ENCODE measurements at regions of chr19 and their contacts with region 1.

Region 1: GRCh38 chr19:18281082-18282020 is at the start of gene JUND:
- DNase-seq: peak; percentile 98
- ATAC-seq: peak; percentile 81
- H3K4me3 ChIP-seq: peak within 1 kb of the TSS; percentile 95
- H3K27ac ChIP-seq: peak within 1 kb of the TSS; percentile 100
- H3K4me1 ChIP-seq: peaks cover 14% of the 10 kb centered on the region
- H3K27me3 ChIP-seq: no peaks in the 10 kb centered on the region
- CTCF ChIP-seq: 0 out of 2 replicates have a peak, but pooled peaks have one; percentile 17
- POLR2A ChIP-seq: peak; percentile 98
- RAD21 ChIP-seq: no peak
- total RNA-seq, gene JUND: 14.2 and 22.8 TPM in 2 replicates

Region 2: DNA sequence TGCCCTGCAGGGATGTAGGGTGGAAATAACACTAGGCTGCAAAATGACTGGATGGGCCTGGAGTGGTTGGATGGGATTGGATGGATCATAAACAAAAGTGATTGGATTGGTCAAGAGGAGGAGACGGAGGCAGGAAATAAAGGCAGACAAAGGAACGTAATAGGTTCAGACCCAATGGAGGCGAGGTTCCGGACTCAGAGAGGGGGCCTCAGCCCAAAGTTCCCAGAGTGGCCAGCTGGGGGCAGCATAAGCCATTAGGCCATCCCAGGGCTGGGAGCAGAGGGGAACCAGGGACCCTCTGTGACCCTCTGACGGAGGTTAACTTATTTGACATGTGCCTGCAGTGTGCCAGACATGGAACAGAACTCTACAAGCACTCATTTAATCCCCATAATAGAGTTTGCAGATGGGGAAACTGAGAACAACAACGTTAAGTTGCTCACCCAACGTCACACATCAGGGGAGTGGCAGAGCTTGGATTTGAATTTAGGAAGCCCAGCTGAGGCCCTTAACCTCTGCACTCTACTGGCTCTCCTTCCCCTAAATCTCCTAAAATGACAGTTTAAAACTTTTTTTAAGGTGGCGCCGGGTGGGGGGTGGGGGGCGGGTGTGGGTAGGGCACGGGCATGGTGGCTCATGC is 577.4 kb before region 1 on chr19:
- CTCF ChIA-PET with region 1: no interaction called
- POLR2A ChIA-PET with region 1: no interaction called
- dilution Hi-C with region 1: no loop called
- in situ Hi-C with region 1: no loop called
- intact Hi-C with region 1: no loop called
- DNase-seq: peak; percentile 31
- ATAC-seq: peak; percentile 67
- H3K4me3 ChIP-seq: no peak overlapping the region
- H3K27ac ChIP-seq: no peak overlapping the region
- H3K4me1 ChIP-seq: no peaks in the 10 kb centered on the region
- H3K27me3 ChIP-seq: peaks cover 5% of the 10 kb centered on the region; the same call in 1 of the 2 replicates
- CTCF ChIP-seq: peak; percentile 54
- POLR2A ChIP-seq: no peak
- RAD21 ChIP-seq: peak; percentile 45; the same call in 1 of the 2 replicates

Region 3: DNA sequence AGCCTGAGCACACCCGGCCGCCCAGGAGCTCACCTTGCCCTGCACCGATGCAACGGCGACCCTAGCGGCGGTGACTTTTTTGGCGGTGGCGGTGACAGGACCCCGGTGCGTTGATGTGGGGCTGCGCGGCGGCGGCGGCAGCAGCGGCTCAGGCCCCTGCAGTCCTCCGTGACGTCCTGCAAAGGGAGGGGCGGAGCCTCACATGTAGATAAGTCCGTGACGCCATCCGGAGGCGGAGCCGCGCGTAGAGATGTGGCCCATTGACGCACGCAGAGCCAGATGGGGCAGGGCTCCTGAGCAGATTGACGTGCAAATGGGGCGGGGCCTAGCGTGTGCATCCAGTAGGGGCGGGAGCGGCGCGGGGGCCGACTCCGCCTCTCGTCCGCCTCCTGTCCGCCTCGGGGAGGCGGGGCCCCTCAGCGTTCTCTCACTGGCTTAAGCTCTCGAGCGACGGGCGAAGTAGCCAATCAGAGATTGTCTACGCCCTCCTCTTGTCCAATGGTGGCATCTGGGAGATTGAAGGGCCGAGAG is 77.4 kb before region 1 on chr19 and contains the start of gene RAB3A:
- CTCF ChIA-PET with region 1: interaction called, 7 read pairs
- POLR2A ChIA-PET with region 1: no interaction called
- dilution Hi-C with region 1: no loop called
- in situ Hi-C with region 1: no loop called
- intact Hi-C with region 1: loop called (anchors 2 kb)
- DNase-seq: peak; percentile 100
- ATAC-seq: peak; percentile 87
- H3K4me3 ChIP-seq: peak within 1 kb of the TSS; percentile 75
- H3K27ac ChIP-seq: peak within 1 kb of the TSS; percentile 93
- H3K4me1 ChIP-seq: peaks cover 16% of the 10 kb centered on the region
- H3K27me3 ChIP-seq: no peaks in the 10 kb centered on the region
- CTCF ChIP-seq: no peak
- POLR2A ChIP-seq: peak; percentile 70
- RAD21 ChIP-seq: no peak
- total RNA-seq, gene RAB3A: 2.8 and 3.0 TPM in 2 replicates

Region 4: DNA sequence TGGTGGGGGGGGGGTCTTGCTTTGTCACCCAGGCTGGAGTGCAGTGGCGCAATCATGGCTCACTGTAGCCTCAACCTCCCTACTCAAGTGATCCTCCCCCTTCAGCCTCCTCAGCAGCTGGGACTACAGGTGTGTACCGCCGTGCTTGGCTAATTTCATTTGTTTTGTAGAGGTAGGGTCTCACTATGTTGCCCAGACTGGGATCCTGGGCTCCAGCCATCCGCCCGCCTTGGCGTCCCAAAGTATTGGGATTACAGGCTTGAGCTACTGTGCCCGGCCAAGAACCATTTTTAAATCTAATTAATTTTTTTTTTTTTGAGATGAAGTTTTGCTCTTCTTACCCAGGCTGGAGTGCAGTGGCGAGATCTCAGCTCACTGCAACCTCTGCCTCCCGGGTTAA is 18.3 kb after region 1 on chr19:
- CTCF ChIA-PET with region 1: interaction called, 15 read pairs
- POLR2A ChIA-PET with region 1: interaction called, 30 read pairs
- dilution Hi-C with region 1: no loop called
- in situ Hi-C with region 1: no loop called
- intact Hi-C with region 1: no loop called
- DNase-seq: no peak
- ATAC-seq: no peak
- H3K4me3 ChIP-seq: no peak overlapping the region
- H3K27ac ChIP-seq: no peak overlapping the region
- H3K4me1 ChIP-seq: peaks cover 19% of the 10 kb centered on the region
- H3K27me3 ChIP-seq: no peaks in the 10 kb centered on the region
- CTCF ChIP-seq: no peak
- POLR2A ChIP-seq: no peak
- RAD21 ChIP-seq: no peak

Region 5: GRCh38 chr19:18322759-18323460 is 41.6 kb after region 1 on chr19 and contains the start of gene LSM4:
- CTCF ChIA-PET with region 1: interaction called, 49 read pairs
- POLR2A ChIA-PET with region 1: interaction called, 25 read pairs
- dilution Hi-C with region 1: no loop called
- in situ Hi-C with region 1: loop called (anchors 5 kb)
- intact Hi-C with region 1: loop called (anchors 1 kb)
- DNase-seq: peak; percentile 95
- ATAC-seq: peak; percentile 98
- H3K4me3 ChIP-seq: peak within 1 kb of the TSS; percentile 77
- H3K27ac ChIP-seq: peak within 1 kb of the TSS; percentile 73
- H3K4me1 ChIP-seq: peaks cover 5% of the 10 kb centered on the region; the same call in 1 of the 2 replicates
- H3K27me3 ChIP-seq: no peaks in the 10 kb centered on the region
- CTCF ChIP-seq: peak; percentile 44
- POLR2A ChIP-seq: peak; percentile 54; the same call in 1 of the 2 replicates
- RAD21 ChIP-seq: peak; percentile 48
- total RNA-seq, gene LSM4: 44.8 and 88.0 TPM in 2 replicates

Region 6: DNA sequence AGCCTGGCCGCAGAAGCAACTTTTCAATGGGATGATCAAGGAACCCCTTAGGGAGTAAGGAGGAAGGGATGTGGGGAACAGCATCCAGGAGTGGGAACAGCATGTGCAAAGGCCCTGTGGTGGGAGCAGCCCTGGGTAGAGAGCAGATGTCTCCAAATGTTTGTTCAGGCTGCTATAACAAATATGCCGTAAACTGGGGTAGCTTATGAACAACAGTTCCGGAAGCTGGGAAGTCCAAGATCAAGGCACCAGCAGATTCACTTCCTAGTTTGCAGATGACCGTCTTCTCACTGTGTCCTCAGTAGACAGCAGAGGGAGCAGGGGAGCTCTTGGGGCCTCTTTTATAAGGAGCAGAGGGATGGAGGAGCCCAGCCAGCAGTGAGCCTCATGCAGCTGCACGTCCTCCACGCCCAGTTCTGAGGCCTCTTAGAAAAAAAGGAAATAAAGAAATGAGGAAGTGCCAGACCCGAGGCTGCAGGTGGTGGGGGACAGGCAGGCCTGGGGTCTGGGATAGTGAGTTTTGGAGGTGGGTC is 120.3 kb after region 1 on chr19:
- CTCF ChIA-PET with region 1: interaction called, 3 read pairs
- POLR2A ChIA-PET with region 1: no interaction called
- dilution Hi-C with region 1: no loop called
- in situ Hi-C with region 1: loop called (anchors 10 kb)
- intact Hi-C with region 1: no loop called
- DNase-seq: peak; percentile 69
- ATAC-seq: peak; percentile 59
- H3K4me3 ChIP-seq: no peak overlapping the region
- H3K27ac ChIP-seq: no peak overlapping the region
- H3K4me1 ChIP-seq: peaks cover 21% of the 10 kb centered on the region
- H3K27me3 ChIP-seq: no peaks in the 10 kb centered on the region
- CTCF ChIP-seq: peak; percentile 45
- POLR2A ChIP-seq: no peak
- RAD21 ChIP-seq: no peak; the same call in 1 of the 2 replicates

Measured in IMR-90 (cell line).